PC-9 (cell line): ENCODE measurements at regions of chr4 and their contacts with region 1.

Region 1: DNA sequence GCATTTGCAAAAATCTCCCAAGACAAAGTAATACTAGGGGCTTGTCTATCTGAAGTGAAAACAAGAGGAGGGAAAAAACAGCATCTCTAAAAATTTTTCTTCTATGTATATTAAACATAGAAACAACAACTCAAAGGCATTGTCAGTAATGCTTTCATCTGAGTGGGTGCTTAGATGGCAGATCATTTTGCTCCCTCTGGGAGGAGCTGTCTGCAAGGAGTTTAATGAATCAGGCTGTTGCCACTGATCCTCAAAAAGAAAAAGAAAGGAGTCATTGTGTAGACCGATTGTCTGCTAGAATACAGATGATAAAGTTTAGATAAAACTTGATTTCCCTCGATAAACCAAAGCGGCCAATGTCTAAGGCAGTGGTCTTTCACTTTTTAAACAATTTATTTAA is 49.7 kb upstream of the KLHL8 start:
- DNase-seq: peak; percentile 5 to 38
- H3K4me3 ChIP-seq: no peak overlapping the region
- H3K27ac ChIP-seq: no peak overlapping the region
- H3K4me1 ChIP-seq: no peaks in the 10 kb centered on the region
- H3K27me3 ChIP-seq: no peaks in the 10 kb centered on the region
- CTCF ChIP-seq: peak; percentile 57

Region 2: DNA sequence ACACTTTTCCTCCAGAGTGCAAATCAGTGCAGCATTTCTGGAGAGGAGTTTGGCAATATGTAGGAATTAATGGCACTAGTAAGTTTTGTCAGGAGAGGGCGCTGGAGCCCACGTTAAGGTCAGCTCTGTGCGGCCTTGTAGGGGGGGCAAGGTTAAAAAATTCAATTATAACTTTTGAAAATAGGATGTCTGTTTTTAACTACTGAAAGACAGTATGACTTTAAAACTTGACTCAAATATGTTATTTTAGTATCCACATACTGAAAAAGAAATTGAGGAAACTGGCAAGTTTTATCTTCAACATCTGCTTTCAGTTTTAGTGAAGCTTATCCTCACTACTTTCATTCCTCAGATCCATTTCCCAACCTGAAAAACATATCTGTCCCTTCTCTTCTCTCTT is 83.4 kb after region 1 on chr4:
- CTCF ChIA-PET with region 1: no interaction called
- POLR2A ChIA-PET with region 1: no interaction called
- intact Hi-C with region 1: loop called (anchors 10 kb)
- DNase-seq: no peak
- H3K4me3 ChIP-seq: no peak overlapping the region
- H3K27ac ChIP-seq: no peak overlapping the region
- H3K4me1 ChIP-seq: no peaks in the 10 kb centered on the region
- H3K27me3 ChIP-seq: no peaks in the 10 kb centered on the region
- CTCF ChIP-seq: peak; percentile 80

Region 3: GRCh38 chr4:87465739-87466366 is 195.7 kb after region 1 on chr4:
- CTCF ChIA-PET with region 1: no interaction called
- POLR2A ChIA-PET with region 1: no interaction called
- intact Hi-C with region 1: loop called (anchors 1 kb)
- DNase-seq: no peak
- H3K4me3 ChIP-seq: no peak overlapping the region
- H3K27ac ChIP-seq: no peak overlapping the region
- H3K4me1 ChIP-seq: 0 out of 2 replicates have a peak, but pooled peaks cover 1% of the 10 kb centered on the region
- H3K27me3 ChIP-seq: no peaks in the 10 kb centered on the region
- CTCF ChIP-seq: peak; percentile 72

Region 4: DNA sequence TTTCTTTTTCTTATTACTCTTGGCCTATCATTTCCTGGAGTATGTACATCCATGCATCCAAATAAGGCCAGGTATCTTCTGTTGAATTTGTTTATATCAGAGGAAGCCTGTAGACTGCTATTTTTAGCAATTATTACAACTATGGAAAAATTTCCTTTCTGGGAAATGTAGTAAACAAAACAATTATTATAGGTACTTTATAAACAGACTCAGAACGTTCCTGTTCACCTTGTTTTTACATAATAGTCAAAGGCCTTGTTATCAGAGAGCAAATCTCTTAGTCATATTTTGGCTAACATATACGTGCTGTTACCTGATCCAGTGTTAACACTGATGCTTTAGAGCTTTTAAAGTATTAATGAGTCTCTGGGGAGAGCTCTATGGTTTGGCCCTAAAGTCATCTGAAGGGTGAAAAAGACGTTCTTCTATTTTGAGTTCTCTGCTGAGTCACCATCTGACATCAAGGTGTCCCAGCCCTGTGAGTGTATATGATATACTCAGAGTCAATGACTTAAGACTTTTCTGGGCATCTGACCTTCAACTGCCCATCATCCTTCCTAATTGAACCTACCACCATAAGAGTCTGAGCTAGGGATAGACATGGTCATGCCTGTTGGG is 251.7 kb after region 1 on chr4:
- CTCF ChIA-PET with region 1: no interaction called
- POLR2A ChIA-PET with region 1: no interaction called
- intact Hi-C with region 1: loop called (anchors 5 kb)
- DNase-seq: peak; percentile 21 to 92
- H3K4me3 ChIP-seq: no peak overlapping the region; the same call in 1 of the 2 replicates
- H3K27ac ChIP-seq: peak overlapping the region; percentile 88
- H3K4me1 ChIP-seq: peaks cover 26% of the 10 kb centered on the region
- H3K27me3 ChIP-seq: no peaks in the 10 kb centered on the region
- CTCF ChIP-seq: no peak